HepG2 (cell line): ENCODE measurements at regions of chr11 and their contacts with region 1.

Region 1: DNA sequence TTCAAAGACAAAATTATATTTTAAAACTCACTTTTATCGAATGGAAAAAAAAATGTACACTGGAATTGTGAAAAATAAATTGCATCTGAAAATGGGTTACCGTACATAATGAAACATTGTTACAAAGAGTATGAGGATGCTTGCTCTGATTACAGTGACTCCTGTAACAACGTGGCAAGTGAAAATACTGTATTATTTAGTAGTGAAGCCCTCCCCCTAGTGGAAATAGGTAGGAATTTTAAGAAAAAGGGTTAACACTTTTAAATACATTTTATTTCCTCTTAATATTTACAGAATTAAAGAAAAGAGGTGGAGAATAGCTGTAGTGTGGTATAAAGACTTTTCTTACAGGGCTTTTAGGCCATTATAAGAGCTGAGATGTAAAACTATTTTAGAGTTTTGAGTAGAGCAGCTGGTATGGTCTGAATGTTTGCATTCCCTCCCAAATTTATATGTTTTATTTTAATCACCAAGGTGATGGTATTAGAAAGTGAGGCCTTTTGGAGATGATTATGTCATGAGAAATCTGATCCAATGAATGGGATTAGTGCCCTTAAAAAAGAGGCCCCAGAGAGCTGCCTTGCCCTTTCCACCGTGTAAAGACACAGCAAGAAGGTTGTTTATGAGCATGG is 25.2 kb downstream of the FAM76B start:
- DNase-seq: peak; percentile 47
- ATAC-seq: peak; percentile 71
- H3K4me3 ChIP-seq: no peak overlapping the region
- H3K27ac ChIP-seq: no peak overlapping the region
- H3K4me1 ChIP-seq: no peaks in the 10 kb centered on the region
- H3K27me3 ChIP-seq: peaks cover 0 to 4% of the 10 kb centered on the region in 2 experiments; a peak in 2 of 5 replicates
- CTCF ChIP-seq: peak; percentile 54
- EP300 ChIP-seq: no peak
- POLR2A ChIP-seq: no peak
- RAD21 ChIP-seq: no peak

Region 2: DNA sequence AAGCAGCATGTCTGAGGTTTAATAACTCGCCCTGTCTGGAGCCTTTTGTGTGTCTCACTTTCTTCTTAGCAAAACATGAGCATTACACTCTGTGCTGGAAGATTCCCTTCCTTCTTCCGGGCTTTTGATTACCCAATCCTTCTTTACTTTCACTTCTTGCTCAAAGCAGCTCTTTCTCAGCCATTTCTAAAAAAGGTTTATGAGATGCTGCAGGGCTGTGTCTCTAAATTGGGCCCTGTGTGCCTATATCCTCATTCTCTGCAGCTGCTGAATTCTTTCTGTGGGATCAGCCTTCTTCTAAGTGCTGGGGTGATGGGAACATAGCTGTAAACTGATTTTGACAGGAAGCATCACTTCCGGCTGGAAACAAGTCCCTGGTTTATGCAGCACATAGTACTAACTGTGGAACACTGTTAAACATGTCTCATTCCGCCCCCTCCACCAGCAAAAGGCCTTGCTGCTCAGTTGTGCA is 1125.4 kb before region 1 on chr11:
- CTCF ChIA-PET with region 1: no interaction called
- POLR2A ChIA-PET with region 1: no interaction called
- in situ Hi-C with region 1: loop called (anchors 25 kb)
- intact Hi-C with region 1: no loop called
- DNase-seq: no peak
- ATAC-seq: no peak
- H3K4me3 ChIP-seq: no peak overlapping the region
- H3K27ac ChIP-seq: no peak overlapping the region
- H3K4me1 ChIP-seq: no peaks in the 10 kb centered on the region
- H3K27me3 ChIP-seq: no peaks in the 10 kb centered on the region
- CTCF ChIP-seq: no peak
- EP300 ChIP-seq: no peak
- POLR2A ChIP-seq: no peak
- RAD21 ChIP-seq: no peak

Region 3: DNA sequence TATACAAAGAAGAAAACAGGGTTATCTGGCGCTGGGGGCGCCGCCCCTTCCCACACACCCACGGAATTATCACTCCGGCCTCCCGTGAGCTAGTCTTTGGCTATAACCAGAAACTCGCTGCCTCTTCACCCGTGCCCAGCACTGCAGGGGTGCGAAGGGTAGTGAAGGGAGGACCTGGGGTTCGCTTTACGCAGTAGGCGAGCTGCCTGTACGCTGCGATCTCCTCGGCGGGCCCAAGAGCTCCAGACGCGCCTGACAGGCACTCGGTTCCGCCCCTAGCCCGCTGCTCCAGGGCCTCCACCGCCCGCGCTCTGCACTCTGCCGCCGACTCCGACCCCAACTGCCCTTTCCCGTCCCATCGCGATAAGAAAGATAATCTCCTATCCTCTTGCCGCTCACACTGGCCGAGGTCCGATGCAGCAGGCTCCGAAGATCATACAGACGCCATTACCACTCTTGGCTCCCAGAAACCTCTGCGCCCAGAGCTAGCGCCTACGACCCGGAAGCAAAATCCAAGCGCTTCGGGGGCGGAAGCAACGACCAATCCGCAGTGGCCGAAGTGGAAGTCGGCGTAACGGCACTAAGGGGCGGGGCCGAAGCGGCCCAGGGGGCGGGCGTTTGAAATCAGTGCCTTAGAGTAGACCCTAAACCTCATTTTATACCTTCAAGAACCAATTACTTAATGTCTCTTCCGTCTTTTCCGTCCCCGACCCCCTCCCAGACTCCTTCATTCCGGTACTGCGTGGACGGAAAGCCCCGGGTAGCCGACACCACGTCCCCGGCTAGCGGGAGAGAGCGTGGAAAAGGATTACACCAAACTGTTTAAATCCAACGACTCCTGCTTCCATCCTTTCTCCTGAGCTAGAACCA is 791.0 kb before region 1 on chr11 and contains the starts of genes CWC15 and KDM4D:
- CTCF ChIA-PET with region 1: no interaction called
- POLR2A ChIA-PET with region 1: no interaction called
- in situ Hi-C with region 1: no loop called
- intact Hi-C with region 1: loop called (anchors 1 kb)
- DNase-seq: peak; percentile 87
- ATAC-seq: peak; percentile 100
- H3K4me3 ChIP-seq: peak within 1 kb of the TSS; percentile 93 to 99 (median 97)
- H3K27ac ChIP-seq: peak within 1 kb of the TSS; percentile 81
- H3K4me1 ChIP-seq: peaks cover 25% of the 10 kb centered on the region
- H3K27me3 ChIP-seq: no peaks in the 10 kb centered on the region; a peak in 1 of 5 replicates
- CTCF ChIP-seq: no peak
- EP300 ChIP-seq: 0 out of 4 replicates have a peak, but pooled peaks of 1 of the 2 experiments have one; percentile 20
- POLR2A ChIP-seq: peak; percentile 81 to 87
- RAD21 ChIP-seq: 0 out of 2 replicates have a peak, but pooled peaks have one; percentile 14
- total RNA-seq, gene CWC15: 61.2 and 73.7 TPM in 2 replicates
- total RNA-seq, gene KDM4D: 1.3 and 2.0 TPM in 2 replicates